Calu3 (cell line): ENCODE measurements at regions of chr1 and their contacts with region 1.

Region 1: GRCh38 chr1:10598389-10598702 is 123.6 kb downstream of the PEX14 start:
- DNase-seq: no peak
- H3K4me3 Mint-ChIP-seq: peak overlapping the region; percentile 32
- H3K27ac Mint-ChIP-seq: peak overlapping the region; percentile 88
- H3K4me1 Mint-ChIP-seq: peaks cover 34% of the 10 kb centered on the region
- H3K27me3 Mint-ChIP-seq: no peaks in the 10 kb centered on the region
- CTCF ChIP-seq: no peak

Region 2: GRCh38 chr1:10528066-10529014 is 70.0 kb before region 1 on chr1:
- CTCF ChIA-PET with region 1: interaction called, 3 read pairs
- intact Hi-C with region 1: loop called (anchors 10 kb)
- DNase-seq: peak; percentile 57
- H3K4me3 Mint-ChIP-seq: peak overlapping the region; percentile 63
- H3K27ac Mint-ChIP-seq: peak overlapping the region; percentile 82
- H3K4me1 Mint-ChIP-seq: peaks cover 27% of the 10 kb centered on the region
- H3K27me3 Mint-ChIP-seq: no peaks in the 10 kb centered on the region
- CTCF ChIP-seq: no peak

Region 3: DNA sequence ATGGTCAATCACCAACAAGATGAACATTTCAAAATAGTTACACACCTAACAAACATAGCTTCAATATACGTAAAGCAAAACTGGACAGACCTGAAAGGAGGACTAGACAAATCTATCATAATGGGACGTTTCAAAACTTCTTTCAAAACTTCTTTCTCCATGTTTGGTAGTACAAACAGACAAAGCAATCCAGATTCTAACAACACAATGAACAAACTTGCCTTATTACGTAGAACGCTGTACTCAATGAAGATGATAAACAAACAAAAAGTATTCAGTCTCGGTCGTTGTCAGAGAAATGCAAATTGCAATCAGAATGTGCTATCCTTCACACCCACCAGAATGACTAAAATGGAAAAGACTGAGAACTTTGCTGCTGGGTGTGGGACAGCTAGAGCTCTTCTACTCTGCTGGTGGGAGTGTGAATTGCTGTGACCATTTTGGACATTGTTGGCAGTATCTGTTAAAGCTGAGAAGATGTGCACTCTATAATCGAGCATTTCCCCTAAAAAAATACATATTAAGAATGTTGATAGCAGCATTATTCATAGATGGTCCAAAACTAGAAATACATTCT is 12.3 kb before region 1 on chr1:
- CTCF ChIA-PET with region 1: no interaction called
- intact Hi-C with region 1: no loop called
- DNase-seq: no peak
- H3K4me3 Mint-ChIP-seq: no peak overlapping the region
- H3K27ac Mint-ChIP-seq: no peak overlapping the region
- H3K4me1 Mint-ChIP-seq: peaks cover 7% of the 10 kb centered on the region
- H3K27me3 Mint-ChIP-seq: no peaks in the 10 kb centered on the region
- CTCF ChIP-seq: no peak